Vagina (tissue), 2 donors: ENCODE measurements at regions of chr5 and their contacts with region 1.

Region 1: GRCh38 chr5:228886-229285 is 10.8 kb downstream of the SDHA start:
- DNase-seq: no peak
- H3K4me3 ChIP-seq: no peak overlapping the region
- H3K27ac ChIP-seq: no peak overlapping the region
- H3K4me1 ChIP-seq: no peaks in the 10 kb centered on the region
- H3K27me3 ChIP-seq: no peaks in the 10 kb centered on the region
- CTCF ChIP-seq: no peak
- POLR2A ChIP-seq: no peak

Region 2: GRCh38 chr5:199950-200645 is 28.8 kb before region 1 on chr5:
- intact Hi-C with region 1: loop called (anchors 2 kb)
- DNase-seq: no peak
- H3K4me3 ChIP-seq: no peak overlapping the region
- H3K27ac ChIP-seq: no peak overlapping the region
- H3K4me1 ChIP-seq: no peaks in the 10 kb centered on the region
- H3K27me3 ChIP-seq: no peaks in the 10 kb centered on the region
- CTCF ChIP-seq: no peak
- POLR2A ChIP-seq: no peak

Region 3: GRCh38 chr5:431001-431710 is 202.3 kb after region 1 on chr5:
- intact Hi-C with region 1: no loop called
- DNase-seq: no peak
- H3K4me3 ChIP-seq: no peak overlapping the region
- H3K27ac ChIP-seq: no peak overlapping the region
- H3K4me1 ChIP-seq: peaks cover 16% of the 10 kb centered on the region
- H3K27me3 ChIP-seq: no peaks in the 10 kb centered on the region
- CTCF ChIP-seq: peak; percentile 37 to 63 (median 50)
- POLR2A ChIP-seq: no peak

Region 4: DNA sequence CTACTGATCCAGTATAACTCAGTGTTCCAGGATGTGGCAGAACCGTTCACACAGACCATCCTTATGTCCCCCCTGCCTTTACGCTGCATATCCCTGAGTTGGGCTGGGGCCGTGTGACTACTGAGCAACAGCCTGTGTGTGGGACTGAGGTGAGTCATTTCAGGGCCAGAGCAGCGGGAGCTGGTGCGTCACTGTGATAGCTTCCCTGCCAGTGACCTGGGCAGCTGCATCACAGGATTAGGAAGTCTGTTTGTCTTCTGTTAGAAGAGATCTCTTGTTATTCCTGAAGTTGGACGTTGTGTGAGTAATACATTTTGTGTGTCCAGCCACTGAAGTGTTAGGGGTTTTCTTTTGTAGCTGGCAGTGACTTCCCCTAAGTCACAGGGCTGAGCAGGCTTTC is 428.7 kb after region 1 on chr5:
- intact Hi-C with region 1: no loop called
- DNase-seq: no peak
- H3K4me3 ChIP-seq: no peak overlapping the region
- H3K27ac ChIP-seq: no peak overlapping the region
- H3K4me1 ChIP-seq: no peaks in the 10 kb centered on the region
- H3K27me3 ChIP-seq: no peaks in the 10 kb centered on the region
- CTCF ChIP-seq: no peak
- POLR2A ChIP-seq: no peak